ENCODE measurements at regions of chr11 and their contacts with region 1.

Region 1: GRCh38 chr11:56799691-56800210 is 51.3 kb upstream of the OR9G4 start:
- DNase-seq: no peak
- H3K4me3 ChIP-seq: no peak overlapping the region
- H3K27ac ChIP-seq: no peak overlapping the region
- H3K4me1 ChIP-seq: no peaks in the 10 kb centered on the region
- H3K27me3 ChIP-seq: peaks cover 4% of the 10 kb centered on the region; the same call in 1 of the 2 replicates
- CTCF ChIP-seq: no peak

Region 2: GRCh38 chr11:56473252-56473651 is 326.5 kb before region 1 on chr11 and contains the start of gene OR5M3:
- CTCF ChIA-PET with region 1: no interaction called
- POLR2A ChIA-PET with region 1: interaction called, 10 read pairs
- intact Hi-C with region 1: no loop called
- DNase-seq: no peak
- H3K4me3 ChIP-seq: no peak within 1 kb of the TSS
- H3K27ac ChIP-seq: no peak within 1 kb of the TSS
- H3K4me1 ChIP-seq: no peaks in the 10 kb centered on the region
- H3K27me3 ChIP-seq: no peaks in the 10 kb centered on the region
- CTCF ChIP-seq: no peak
- total RNA-seq, gene OR5M3: not detected in 2 replicates

Region 3: GRCh38 chr11:57116654-57117053 is 316.9 kb after region 1 on chr11:
- CTCF ChIA-PET with region 1: no interaction called
- POLR2A ChIA-PET with region 1: no interaction called
- intact Hi-C with region 1: no loop called
- DNase-seq: peak; percentile 34 to 65
- H3K4me3 ChIP-seq: no peak overlapping the region
- H3K27ac ChIP-seq: no peak overlapping the region
- H3K4me1 ChIP-seq: peaks cover 8% of the 10 kb centered on the region
- H3K27me3 ChIP-seq: no peaks in the 10 kb centered on the region
- CTCF ChIP-seq: peak; percentile 86

Region 4: GRCh38 chr11:57237204-57237681 is 437.5 kb after region 1 on chr11 and contains the start of gene APLNR:
- CTCF ChIA-PET with region 1: no interaction called
- POLR2A ChIA-PET with region 1: no interaction called
- intact Hi-C with region 1: no loop called
- DNase-seq: no peak
- H3K4me3 ChIP-seq: no peak within 1 kb of the TSS
- H3K27ac ChIP-seq: no peak within 1 kb of the TSS
- H3K4me1 ChIP-seq: no peaks in the 10 kb centered on the region
- H3K27me3 ChIP-seq: peaks cover 34% of the 10 kb centered on the region
- CTCF ChIP-seq: no peak
- total RNA-seq, gene APLNR: not detected in 2 replicates

Measured in PC-9 (cell line).